Panc1 (cell line): ENCODE measurements at regions of chr12 and their contacts with region 1.

Region 1: GRCh38 chr12:121214855-121215745 is 5.2 kb downstream of the P2RX4 start:
- DNase-seq: peak; percentile 64
- ATAC-seq: peak; percentile 57; the same call in 1 of the 2 replicates
- H3K4me3 ChIP-seq: no peak overlapping the region
- H3K27ac ChIP-seq: no peak overlapping the region
- H3K4me1 ChIP-seq: 0 out of 2 replicates have a peak, but pooled peaks cover 3% of the 10 kb centered on the region
- H3K27me3 ChIP-seq: no peaks in the 10 kb centered on the region
- CTCF ChIP-seq: no peak

Region 2: DNA sequence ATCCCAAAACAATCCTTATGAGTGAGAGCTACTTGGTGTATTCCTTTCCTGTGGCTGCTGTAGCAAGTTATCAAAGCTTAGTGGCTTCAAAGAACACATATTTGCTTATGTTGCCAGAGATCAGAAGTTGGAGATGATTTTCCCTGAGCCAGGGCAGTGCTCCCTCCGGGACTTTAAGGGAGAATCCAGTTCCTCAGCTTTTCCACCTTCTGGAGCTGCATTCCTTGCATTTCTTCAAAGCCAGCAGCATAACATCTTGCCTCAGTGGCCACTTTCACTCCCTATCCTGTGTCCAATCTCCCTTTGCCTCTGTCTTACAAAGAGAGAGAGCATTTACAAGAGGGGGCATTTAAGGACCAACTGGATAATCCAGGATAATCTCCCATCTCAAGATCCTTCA is 48.7 kb before region 1 on chr12:
- CTCF ChIA-PET with region 1: no interaction called
- POLR2A ChIA-PET with region 1: interaction called, 13 read pairs
- in situ Hi-C with region 1: no loop called
- intact Hi-C with region 1: no loop called
- DNase-seq: no peak
- ATAC-seq: no peak
- H3K4me3 ChIP-seq: no peak overlapping the region
- H3K27ac ChIP-seq: no peak overlapping the region
- H3K4me1 ChIP-seq: no peaks in the 10 kb centered on the region
- H3K27me3 ChIP-seq: no peaks in the 10 kb centered on the region
- CTCF ChIP-seq: no peak

Region 3: DNA sequence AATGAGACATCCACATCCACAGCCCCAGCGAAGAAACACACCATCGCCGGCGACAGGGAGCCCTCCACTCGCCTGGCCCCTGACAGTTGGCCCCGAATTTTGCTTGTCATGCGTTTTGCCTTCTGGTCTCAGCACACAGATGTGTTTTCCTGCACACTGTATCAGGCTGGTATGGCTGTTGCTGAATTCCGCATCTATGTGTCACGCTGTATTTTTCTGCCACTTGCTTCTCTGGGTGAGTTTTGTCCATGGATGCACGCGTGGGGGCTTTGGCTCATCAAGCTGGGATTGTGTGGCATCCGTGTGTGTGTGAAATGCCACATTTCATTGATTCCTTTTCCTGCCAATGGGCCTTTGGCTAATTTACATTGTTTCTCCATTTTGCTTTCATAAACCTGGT is 1791.9 kb after region 1 on chr12:
- CTCF ChIA-PET with region 1: interaction called, 11 read pairs
- POLR2A ChIA-PET with region 1: no interaction called
- in situ Hi-C with region 1: no loop called
- intact Hi-C with region 1: no loop called
- DNase-seq: no peak
- ATAC-seq: no peak
- H3K4me3 ChIP-seq: no peak overlapping the region
- H3K27ac ChIP-seq: no peak overlapping the region
- H3K4me1 ChIP-seq: no peaks in the 10 kb centered on the region
- H3K27me3 ChIP-seq: no peaks in the 10 kb centered on the region
- CTCF ChIP-seq: no peak